ENCODE measurements at regions of chr20 and their contacts with region 1.

Region 1: GRCh38 chr20:62937366-62938104 is 412 bp upstream of the GID8 start:
- DNase-seq: peak; percentile 93
- H3K4me3 ChIP-seq: peak overlapping the region; percentile 95 to 100 (median 97)
- H3K27ac ChIP-seq: peak overlapping the region; percentile 87
- H3K4me1 ChIP-seq: peaks cover 15% of the 10 kb centered on the region
- H3K27me3 ChIP-seq: no peaks in the 10 kb centered on the region
- CTCF ChIP-seq: no peak

Region 2: DNA sequence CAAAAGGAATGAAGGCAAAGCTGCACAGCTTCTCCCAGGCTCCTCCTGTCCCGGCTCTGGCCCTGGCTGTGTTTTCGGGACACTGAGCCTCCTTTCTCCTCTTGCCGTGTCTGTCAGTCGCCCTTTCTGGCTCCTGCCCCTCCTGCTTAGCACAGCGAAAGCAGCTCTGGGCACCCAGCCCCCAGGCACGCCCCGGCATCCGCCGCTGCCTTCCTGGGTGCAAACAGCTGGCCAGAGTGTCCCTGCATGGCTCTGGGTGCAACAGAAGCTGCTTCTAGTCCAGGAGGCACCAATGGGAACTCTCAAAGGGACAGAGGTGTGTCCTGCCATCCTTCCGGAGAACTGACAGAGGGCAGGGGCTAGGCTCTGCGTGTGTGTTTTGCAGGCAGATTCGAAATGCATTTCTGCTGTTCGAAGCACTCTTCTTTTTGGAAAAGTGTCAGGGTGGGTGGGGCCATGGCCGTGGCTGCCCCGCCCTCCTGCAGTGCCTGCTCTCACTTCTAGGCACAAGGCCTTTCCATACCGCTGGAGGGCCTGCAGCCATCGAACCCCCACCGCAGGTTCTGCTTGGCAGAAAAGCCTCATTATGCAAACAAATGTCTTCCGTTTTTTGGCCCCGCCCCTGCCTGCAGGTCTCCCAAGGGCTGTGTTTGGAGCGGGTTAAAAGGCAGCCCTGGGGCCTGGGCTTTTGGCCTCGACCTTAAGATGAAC is 105.2 kb before region 1 on chr20:
- CTCF ChIA-PET with region 1: no interaction called
- dilution Hi-C with region 1: no loop called
- in situ Hi-C with region 1: no loop called
- intact Hi-C with region 1: no loop called
- DNase-seq: no peak
- H3K4me3 ChIP-seq: no peak overlapping the region
- H3K27ac ChIP-seq: no peak overlapping the region
- H3K4me1 ChIP-seq: peaks cover 21% of the 10 kb centered on the region
- H3K27me3 ChIP-seq: no peaks in the 10 kb centered on the region
- CTCF ChIP-seq: no peak

Region 3: DNA sequence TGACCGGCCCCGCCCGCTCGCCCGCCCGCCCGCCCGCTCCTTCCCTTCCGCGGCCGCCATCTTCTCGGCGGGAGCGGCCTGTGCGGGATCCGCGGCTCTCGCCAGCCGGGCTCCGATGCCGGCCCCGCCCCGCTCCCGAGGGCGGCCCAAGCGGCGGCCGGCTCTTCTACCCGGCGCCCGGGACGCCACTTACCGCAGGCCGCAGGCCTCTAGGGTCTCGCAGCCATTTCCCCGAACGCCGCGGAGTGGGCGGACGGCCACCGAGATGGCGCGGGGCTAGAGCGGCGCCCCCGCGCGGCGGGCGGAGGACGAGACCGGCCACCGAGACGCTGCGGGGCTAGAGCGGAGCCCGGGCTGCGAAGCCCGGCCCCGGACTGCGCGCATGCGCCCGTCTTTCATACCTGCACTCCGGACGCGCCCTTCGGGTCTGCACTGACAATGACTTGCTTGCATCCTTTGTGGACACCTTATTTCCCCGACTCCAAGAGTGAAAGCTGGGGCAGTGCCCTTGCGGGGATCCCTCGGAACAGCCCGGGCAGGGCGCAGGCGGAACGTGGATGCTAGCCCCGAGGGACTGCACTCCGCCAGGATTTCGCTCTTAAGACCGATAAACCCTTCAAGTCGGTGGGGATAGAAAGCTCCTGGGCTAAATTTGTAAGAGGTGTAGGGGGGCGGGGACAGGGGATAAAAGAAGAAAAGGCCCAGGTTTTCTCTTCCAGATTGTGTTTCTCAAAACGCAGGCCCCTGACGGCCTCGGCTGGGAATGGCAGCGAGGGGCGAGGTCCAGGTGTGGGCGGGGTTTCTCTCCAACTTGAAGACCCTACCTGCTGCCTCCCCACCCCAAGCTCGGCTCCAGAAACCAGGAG is 11.1 kb before region 1 on chr20 and contains the start of gene DIDO1:
- CTCF ChIA-PET with region 1: no interaction called
- dilution Hi-C with region 1: no loop called
- in situ Hi-C with region 1: no loop called
- intact Hi-C with region 1: loop called (anchors 1 kb)
- DNase-seq: peak; percentile 86
- H3K4me3 ChIP-seq: peak within 1 kb of the TSS; percentile 96 to 98 (median 97)
- H3K27ac ChIP-seq: peak within 1 kb of the TSS; percentile 97
- H3K4me1 ChIP-seq: peaks cover 58% of the 10 kb centered on the region
- H3K27me3 ChIP-seq: no peaks in the 10 kb centered on the region
- CTCF ChIP-seq: peak; percentile 14 to 61
- total RNA-seq, gene DIDO1: 38.7 to 53.2 TPM

Region 4: GRCh38 chr20:63056236-63056948 is 118.9 kb after region 1 on chr20:
- CTCF ChIA-PET with region 1: no interaction called
- dilution Hi-C with region 1: no loop called
- in situ Hi-C with region 1: no loop called
- intact Hi-C with region 1: no loop called
- DNase-seq: no peak
- H3K4me3 ChIP-seq: no peak overlapping the region
- H3K27ac ChIP-seq: no peak overlapping the region
- H3K4me1 ChIP-seq: no peaks in the 10 kb centered on the region
- H3K27me3 ChIP-seq: peaks cover 4% of the 10 kb centered on the region
- CTCF ChIP-seq: peak; percentile 36 to 68

Measured in mammary epithelial cell (primary cell).